CD8-positive, alpha-beta memory T cell (primary cell): ENCODE measurements at regions of chr14 and their contacts with region 1.

Region 1: GRCh38 chr14:51860164-51860824 is at the start of gene GNG2:
- DNase-seq: peak; percentile 71 to 90 (median 84)
- H3K4me3 ChIP-seq: peak within 1 kb of the TSS; percentile 98
- H3K4me3 Mint-ChIP-seq: peak within 1 kb of the TSS; percentile 93 to 99 (median 98)
- H3K27ac ChIP-seq: peak within 1 kb of the TSS; percentile 93
- H3K27ac Mint-ChIP-seq: peak within 1 kb of the TSS; percentile 93 to 99 (median 96)
- H3K4me1 ChIP-seq: peaks cover 59% of the 10 kb centered on the region
- H3K4me1 Mint-ChIP-seq: peaks cover 42 to 59% (median 55%) of the 10 kb centered on the region in 3 donors
- H3K27me3 ChIP-seq: no peaks in the 10 kb centered on the region
- H3K27me3 Mint-ChIP-seq: peaks cover 0 to 3% of the 10 kb centered on the region in 2 donors
- total RNA-seq, gene GNG2: 106 to 112 TPM

Region 2: DNA sequence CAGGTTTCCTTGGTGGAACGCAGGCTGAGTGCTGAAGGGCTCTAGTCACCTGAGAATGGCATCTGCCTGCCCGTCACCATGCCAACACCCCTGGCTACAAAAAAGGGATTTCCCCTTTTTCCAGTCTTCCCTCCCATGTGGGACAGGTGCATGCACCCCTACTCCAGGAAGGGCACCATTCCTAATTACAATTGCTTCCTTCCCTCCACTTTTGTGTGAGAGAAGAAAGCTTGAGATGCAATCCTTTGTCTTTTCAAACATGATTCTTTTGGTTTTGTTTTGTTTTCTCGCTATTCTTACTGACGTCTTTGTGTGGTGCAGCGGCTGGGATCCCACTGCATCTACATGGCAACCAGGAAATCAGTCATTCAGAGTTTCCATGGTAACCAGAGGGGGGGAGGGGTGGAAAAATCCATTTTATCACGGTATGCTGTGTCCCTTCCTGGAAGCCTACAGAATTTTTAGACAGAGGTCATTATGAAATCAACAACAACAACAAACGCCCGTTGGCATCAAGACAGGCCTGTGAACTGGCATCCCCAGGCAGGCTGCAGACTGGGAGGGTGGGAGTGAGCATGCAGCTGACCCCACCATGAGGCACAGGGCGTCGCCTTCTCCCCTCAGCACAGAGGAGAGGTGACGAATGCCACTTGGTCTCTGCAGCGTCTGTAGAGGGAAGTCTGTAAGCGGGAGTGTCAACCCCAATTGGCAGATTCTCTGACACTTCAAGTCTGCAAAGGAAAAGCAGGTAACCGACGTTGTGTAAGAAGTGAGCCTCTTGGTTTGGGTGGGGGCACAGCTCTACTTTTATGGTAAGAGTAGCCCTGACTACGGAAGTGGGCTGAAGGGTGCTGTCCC is 13.4 kb before region 1 on chr14:
- CTCF ChIA-PET with region 1: interaction called, 22 read pairs
- POLR2A ChIA-PET with region 1: interaction called, 60 read pairs
- DNase-seq: peak; percentile 76 to 97 (median 95)
- H3K4me3 ChIP-seq: peak overlapping the region; percentile 72
- H3K4me3 Mint-ChIP-seq: peak overlapping the region; percentile 86 to 95 (median 87)
- H3K27ac ChIP-seq: peak overlapping the region; percentile 98
- H3K27ac Mint-ChIP-seq: peak overlapping the region; percentile 96 to 100 (median 99)
- H3K4me1 ChIP-seq: peaks cover 53% of the 10 kb centered on the region
- H3K4me1 Mint-ChIP-seq: peaks cover 64 to 79% (median 73%) of the 10 kb centered on the region in 3 donors
- H3K27me3 ChIP-seq: no peaks in the 10 kb centered on the region
- H3K27me3 Mint-ChIP-seq: peaks cover 0 to 11% of the 10 kb centered on the region in 2 donors

Region 3: GRCh38 chr14:51929166-51929565 is 68.9 kb after region 1 on chr14:
- CTCF ChIA-PET with region 1: no interaction called
- POLR2A ChIA-PET with region 1: no interaction called
- DNase-seq: no peak
- H3K4me3 ChIP-seq: no peak overlapping the region
- H3K4me3 Mint-ChIP-seq: peak overlapping the region in 3 of 7 donors; percentile 8 to 25 (median 18)
- H3K27ac ChIP-seq: no peak overlapping the region
- H3K27ac Mint-ChIP-seq: peak overlapping the region in 7 of 8 donors; percentile 10 to 97 (median 58)
- H3K4me1 ChIP-seq: peaks cover 49% of the 10 kb centered on the region
- H3K4me1 Mint-ChIP-seq: peaks cover 71 to 89% (median 83%) of the 10 kb centered on the region in 3 donors
- H3K27me3 ChIP-seq: no peaks in the 10 kb centered on the region
- H3K27me3 Mint-ChIP-seq: no peaks in the 10 kb centered on the region

Region 4: DNA sequence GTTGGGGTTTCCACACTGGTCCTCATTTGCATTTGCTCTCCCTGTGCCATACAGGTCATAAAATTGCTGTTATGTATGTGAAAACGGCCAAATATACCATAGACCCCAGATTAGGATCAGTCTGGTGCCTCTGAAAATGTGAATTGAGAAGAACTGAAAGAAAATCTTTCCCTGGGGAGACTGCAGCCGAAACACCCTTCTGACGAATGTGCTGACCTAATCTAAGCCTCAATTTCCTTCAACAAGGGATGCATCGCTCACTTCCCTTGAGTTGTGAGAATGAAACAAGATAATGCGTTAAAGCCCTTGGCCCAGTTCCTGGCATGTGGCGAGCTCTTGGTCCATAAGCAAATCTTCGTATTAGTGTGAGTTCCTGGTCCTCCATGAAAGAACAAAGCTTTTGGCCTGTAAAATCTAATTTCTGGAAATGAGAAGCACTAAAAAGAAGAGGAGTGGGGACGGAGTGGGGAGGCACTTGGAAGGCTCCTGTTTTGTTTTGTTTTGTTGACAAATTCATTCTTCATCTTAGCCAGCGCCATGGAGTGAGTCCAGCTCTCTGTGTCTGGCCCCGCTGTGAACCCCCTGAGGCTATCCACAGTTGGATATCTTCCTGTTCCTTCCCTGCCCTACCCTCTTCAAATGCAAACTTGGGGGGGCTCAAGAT is 79.6 kb after region 1 on chr14:
- CTCF ChIA-PET with region 1: no interaction called
- POLR2A ChIA-PET with region 1: no interaction called
- DNase-seq: no peak
- H3K4me3 ChIP-seq: no peak overlapping the region
- H3K4me3 Mint-ChIP-seq: peak overlapping the region in 4 of 7 donors; percentile 17 to 61 (median 34)
- H3K27ac ChIP-seq: no peak overlapping the region
- H3K27ac Mint-ChIP-seq: peak overlapping the region; percentile 7 to 91 (median 76)
- H3K4me1 ChIP-seq: no peaks in the 10 kb centered on the region
- H3K4me1 Mint-ChIP-seq: peaks cover 57 to 88% (median 82%) of the 10 kb centered on the region in 3 donors
- H3K27me3 ChIP-seq: no peaks in the 10 kb centered on the region
- H3K27me3 Mint-ChIP-seq: no peaks in the 10 kb centered on the region